Activated naive CD4-positive, alpha-beta T cell treated with anti-CD3 and anti-CD28 coated beads for 36 hours (primary cell): ENCODE measurements at regions of chr2 and their contacts with region 1.

Region 1: DNA sequence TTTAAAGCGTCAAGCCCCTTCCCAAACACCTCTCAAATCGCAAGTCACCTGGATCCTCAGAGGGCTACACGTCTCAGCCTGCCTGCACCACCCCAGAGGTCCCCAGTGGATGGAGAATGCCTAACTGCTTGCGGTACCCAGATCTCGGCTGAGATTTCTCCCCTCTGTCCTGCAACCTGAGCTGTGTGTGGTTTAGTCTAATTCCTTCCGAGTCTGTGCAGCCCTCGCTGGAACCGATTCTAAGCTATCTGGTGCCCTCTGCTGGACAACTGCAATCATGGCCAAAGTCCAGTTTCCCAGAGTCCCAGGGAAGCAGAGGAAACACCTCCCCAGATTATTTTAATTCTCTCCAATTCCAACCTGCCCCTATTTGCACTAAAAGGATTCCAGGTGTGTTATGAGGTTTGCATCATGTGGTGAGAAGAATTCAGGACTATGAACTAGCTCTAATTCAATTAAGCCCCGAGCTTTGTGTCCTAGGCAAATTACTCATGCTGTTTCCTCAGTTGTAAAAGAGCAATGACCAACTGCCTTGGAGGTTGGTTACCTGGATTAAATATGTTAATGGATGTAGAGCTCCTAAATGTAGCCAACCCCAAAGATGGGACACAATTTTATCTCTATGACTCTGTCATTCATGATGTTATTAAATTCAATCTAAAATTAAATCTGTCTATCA is 276.1 kb upstream of the NCKAP5 start:
- DNase-seq: peak; percentile 74
- H3K4me3 Mint-ChIP-seq: no peak overlapping the region
- H3K27ac Mint-ChIP-seq: no peak overlapping the region
- H3K4me1 Mint-ChIP-seq: peaks cover 5% of the 10 kb centered on the region
- H3K27me3 Mint-ChIP-seq: peaks cover 8% of the 10 kb centered on the region

Region 2: GRCh38 chr2:132267105-132267497 is 1577.3 kb before region 1 on chr2:
- CTCF ChIA-PET with region 1: no interaction called
- intact Hi-C with region 1: loop called (anchors 1 kb)
- DNase-seq: no peak
- H3K4me3 Mint-ChIP-seq: no peak overlapping the region
- H3K27ac Mint-ChIP-seq: no peak overlapping the region
- H3K4me1 Mint-ChIP-seq: peaks cover 3% of the 10 kb centered on the region
- H3K27me3 Mint-ChIP-seq: peaks cover 9% of the 10 kb centered on the region

Region 3: GRCh38 chr2:132547074-132547687 is 1297.2 kb before region 1 on chr2:
- CTCF ChIA-PET with region 1: interaction called, 20 read pairs
- intact Hi-C with region 1: loop called (anchors 2 kb)
- DNase-seq: peak; percentile 77
- H3K4me3 Mint-ChIP-seq: no peak overlapping the region
- H3K27ac Mint-ChIP-seq: no peak overlapping the region
- H3K4me1 Mint-ChIP-seq: no peaks in the 10 kb centered on the region
- H3K27me3 Mint-ChIP-seq: peaks cover 4% of the 10 kb centered on the region

Region 4: GRCh38 chr2:133561045-133561852 is 283.1 kb before region 1 on chr2:
- CTCF ChIA-PET with region 1: no interaction called
- intact Hi-C with region 1: loop called (anchors 1 kb)
- DNase-seq: no peak
- H3K4me3 Mint-ChIP-seq: no peak overlapping the region
- H3K27ac Mint-ChIP-seq: no peak overlapping the region
- H3K4me1 Mint-ChIP-seq: no peaks in the 10 kb centered on the region
- H3K27me3 Mint-ChIP-seq: peaks cover 8% of the 10 kb centered on the region

Region 5: DNA sequence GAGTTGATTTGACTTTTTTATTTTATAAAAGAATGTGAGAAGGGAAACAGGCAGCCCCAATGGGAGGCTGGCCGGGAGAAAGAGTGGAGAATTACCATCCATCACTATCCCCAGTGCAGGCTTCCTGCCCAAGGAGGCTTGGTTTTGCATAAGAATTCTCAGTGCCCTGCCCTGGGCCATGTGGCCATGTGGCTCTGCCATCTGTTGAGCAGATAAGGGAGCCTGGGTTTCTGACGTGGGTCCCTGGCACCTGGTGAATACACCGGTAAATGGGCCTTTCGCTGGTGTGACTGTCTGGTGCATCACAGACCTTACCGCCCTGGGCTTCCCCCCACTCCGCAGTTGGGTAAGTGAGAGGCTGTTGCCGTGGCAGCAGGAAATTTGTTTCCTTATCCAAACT is 929.0 kb after region 1 on chr2:
- CTCF ChIA-PET with region 1: no interaction called
- intact Hi-C with region 1: no loop called
- DNase-seq: no peak
- H3K4me3 Mint-ChIP-seq: no peak overlapping the region
- H3K27ac Mint-ChIP-seq: no peak overlapping the region
- H3K4me1 Mint-ChIP-seq: peaks cover 5% of the 10 kb centered on the region
- H3K27me3 Mint-ChIP-seq: no peaks in the 10 kb centered on the region